AG04450 (cell line): ENCODE measurements at regions of chr14 and their contacts with region 1.

Region 1: GRCh38 chr14:54509546-54510501 is at the start of gene CGRRF1:
- DNase-seq: peak; percentile 96
- H3K4me3 ChIP-seq: peak within 1 kb of the TSS; percentile 97
- H3K27ac ChIP-seq: peak within 1 kb of the TSS; percentile 12
- H3K27me3 ChIP-seq: no peaks in the 10 kb centered on the region
- CTCF ChIP-seq: peak; percentile 42
- polyA plus RNA-seq, gene CGRRF1: 15.2 and 22.2 TPM in 2 replicates

Region 2: DNA sequence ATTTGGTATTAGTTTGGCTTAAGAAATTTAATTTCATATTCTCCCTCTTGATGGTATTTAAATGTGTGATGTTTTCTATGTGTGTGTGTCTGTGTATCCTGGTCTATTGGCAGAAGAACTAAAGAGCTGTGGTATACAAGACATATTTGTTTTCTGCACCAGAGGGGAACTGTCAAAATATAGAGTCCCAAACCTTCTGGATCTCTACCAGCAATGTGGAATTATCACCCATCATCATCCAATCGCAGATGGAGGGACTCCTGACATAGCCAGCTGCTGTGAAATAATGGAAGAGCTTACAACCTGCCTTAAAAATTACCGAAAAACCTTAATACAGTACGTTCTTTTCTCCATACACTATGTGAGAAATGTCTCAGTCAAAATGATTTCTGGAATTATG is 98.5 kb before region 1 on chr14:
- CTCF ChIA-PET with region 1: no interaction called
- POLR2A ChIA-PET with region 1: no interaction called
- DNase-seq: no peak
- H3K4me3 ChIP-seq: no peak overlapping the region
- H3K27ac ChIP-seq: no peak overlapping the region
- H3K27me3 ChIP-seq: no peaks in the 10 kb centered on the region
- CTCF ChIP-seq: no peak

Region 3: GRCh38 chr14:54488646-54489317 is 21.0 kb before region 1 on chr14 and contains the start of gene GMFB:
- CTCF ChIA-PET with region 1: interaction called, 20 read pairs
- POLR2A ChIA-PET with region 1: interaction called, 12 read pairs
- DNase-seq: peak; percentile 77
- H3K4me3 ChIP-seq: peak within 1 kb of the TSS; percentile 91
- H3K27ac ChIP-seq: peak within 1 kb of the TSS; percentile 93
- H3K27me3 ChIP-seq: peaks cover 5% of the 10 kb centered on the region
- CTCF ChIP-seq: peak; percentile 67
- polyA plus RNA-seq, gene GMFB: 34.2 and 49.2 TPM in 2 replicates

Region 4: DNA sequence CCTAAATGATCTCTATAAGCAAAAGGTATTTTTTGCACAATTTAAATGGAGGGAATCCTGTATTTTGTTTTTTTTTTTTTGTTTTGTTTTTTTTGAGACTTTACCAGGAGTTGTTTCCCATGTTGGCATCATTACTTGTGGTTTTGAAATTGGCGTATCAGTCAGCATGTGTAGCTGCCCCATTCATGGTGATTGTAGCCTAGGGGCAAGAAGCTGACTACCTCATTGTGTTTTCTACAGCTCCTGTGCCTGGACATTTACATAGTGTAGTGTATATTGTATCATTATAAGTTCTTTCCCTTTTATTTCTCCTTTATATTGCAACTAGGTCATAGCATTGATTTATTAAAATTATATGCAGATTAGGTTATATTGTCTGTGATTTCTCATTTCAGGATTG is 81.6 kb after region 1 on chr14:
- CTCF ChIA-PET with region 1: no interaction called
- POLR2A ChIA-PET with region 1: no interaction called
- DNase-seq: no peak
- H3K4me3 ChIP-seq: no peak overlapping the region
- H3K27ac ChIP-seq: no peak overlapping the region
- H3K27me3 ChIP-seq: no peaks in the 10 kb centered on the region
- CTCF ChIP-seq: no peak